Activated CD4-positive, alpha-beta memory T cell treated with anti-CD3 and anti-CD28 coated beads for 36 hours (primary cell): ENCODE measurements at regions of chr13 and their contacts with region 1.

Region 1: DNA sequence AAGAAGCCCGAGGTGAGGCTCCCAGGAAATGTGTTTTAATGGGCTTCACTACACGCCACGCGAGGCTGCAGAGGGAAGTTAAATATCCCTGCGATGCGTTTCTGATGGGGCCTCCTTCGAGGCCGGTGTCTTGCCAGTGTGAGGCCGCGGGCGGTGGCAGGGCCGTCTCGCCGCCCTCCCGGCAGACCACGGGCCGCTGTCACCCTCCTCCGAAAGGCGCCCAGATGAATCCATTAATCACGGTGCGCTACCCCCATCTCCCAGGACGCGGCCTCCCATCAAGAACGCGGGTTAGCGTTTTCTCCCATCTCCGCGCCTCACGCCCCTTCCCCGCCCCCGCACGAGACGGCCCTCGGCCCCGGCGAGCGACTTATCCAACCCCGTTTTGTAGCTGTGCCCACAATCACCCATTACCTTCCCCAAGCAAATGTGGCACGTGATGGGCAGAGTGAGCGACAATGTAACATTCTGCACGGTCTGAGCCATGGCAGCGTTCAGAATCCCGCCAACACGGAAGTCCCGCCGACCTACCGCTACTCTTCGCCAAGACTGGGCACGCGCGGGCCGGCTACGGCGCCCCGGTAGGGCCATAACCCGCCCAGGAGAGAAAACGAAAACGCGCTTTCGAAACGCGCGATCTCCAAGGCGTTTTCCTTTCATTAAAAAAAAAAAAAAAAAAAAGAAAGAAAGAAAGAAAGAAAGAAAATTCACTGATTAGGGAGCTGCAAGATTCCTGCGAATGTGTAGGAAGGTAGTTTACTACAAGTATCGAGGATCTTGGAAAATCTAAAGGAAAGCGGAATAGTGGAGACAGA is at the start of gene OBI1:
- DNase-seq: peak; percentile 93
- H3K4me3 Mint-ChIP-seq: peak within 1 kb of the TSS; percentile 97
- H3K27ac Mint-ChIP-seq: peak within 1 kb of the TSS; percentile 91
- H3K4me1 Mint-ChIP-seq: peaks cover 29% of the 10 kb centered on the region
- H3K27me3 Mint-ChIP-seq: no peaks in the 10 kb centered on the region
- total RNA-seq, gene OBI1: 17.6 TPM

Region 2: GRCh38 chr13:77291774-77292173 is 1367.1 kb before region 1 on chr13:
- CTCF ChIA-PET with region 1: no interaction called
- POLR2A ChIA-PET with region 1: no interaction called
- intact Hi-C with region 1: loop called (anchors 2 kb)
- DNase-seq: no peak
- H3K4me3 Mint-ChIP-seq: no peak overlapping the region
- H3K27ac Mint-ChIP-seq: peak overlapping the region; percentile 42
- H3K4me1 Mint-ChIP-seq: peaks cover 39% of the 10 kb centered on the region
- H3K27me3 Mint-ChIP-seq: no peaks in the 10 kb centered on the region

Region 3: GRCh38 chr13:78609464-78610205 is 49.2 kb before region 1 on chr13:
- CTCF ChIA-PET with region 1: no interaction called
- POLR2A ChIA-PET with region 1: no interaction called
- intact Hi-C with region 1: loop called (anchors 2 kb)
- DNase-seq: no peak
- H3K4me3 Mint-ChIP-seq: peak overlapping the region; percentile 53
- H3K27ac Mint-ChIP-seq: no peak overlapping the region
- H3K4me1 Mint-ChIP-seq: peaks cover 30% of the 10 kb centered on the region
- H3K27me3 Mint-ChIP-seq: peaks cover 55% of the 10 kb centered on the region

Region 4: GRCh38 chr13:79194272-79194671 is 535.4 kb after region 1 on chr13:
- CTCF ChIA-PET with region 1: no interaction called
- POLR2A ChIA-PET with region 1: no interaction called
- intact Hi-C with region 1: loop called (anchors 5 kb)
- DNase-seq: peak; percentile 79
- H3K4me3 Mint-ChIP-seq: no peak overlapping the region
- H3K27ac Mint-ChIP-seq: no peak overlapping the region
- H3K4me1 Mint-ChIP-seq: peaks cover 38% of the 10 kb centered on the region
- H3K27me3 Mint-ChIP-seq: no peaks in the 10 kb centered on the region